ENCODE measurements at regions of chr7 and their contacts with region 1.

Region 1: GRCh38 chr7:5494683-5495561 is 71.3 kb upstream of the TNRC18 start:
- DNase-seq: peak; percentile 74 to 97 (median 84)

Region 2: GRCh38 chr7:5557920-5558401 is 63.0 kb after region 1 on chr7:
- intact Hi-C with region 1: loop called (anchors 1 kb)
- DNase-seq: peak in 5 of 10 donors; percentile 29 to 83 (median 41)

Region 3: GRCh38 chr7:5677538-5678294 is 182.8 kb after region 1 on chr7:
- intact Hi-C with region 1: loop called (anchors 5 kb)
- DNase-seq: peak; percentile 42 to 95 (median 70)

Region 4: DNA sequence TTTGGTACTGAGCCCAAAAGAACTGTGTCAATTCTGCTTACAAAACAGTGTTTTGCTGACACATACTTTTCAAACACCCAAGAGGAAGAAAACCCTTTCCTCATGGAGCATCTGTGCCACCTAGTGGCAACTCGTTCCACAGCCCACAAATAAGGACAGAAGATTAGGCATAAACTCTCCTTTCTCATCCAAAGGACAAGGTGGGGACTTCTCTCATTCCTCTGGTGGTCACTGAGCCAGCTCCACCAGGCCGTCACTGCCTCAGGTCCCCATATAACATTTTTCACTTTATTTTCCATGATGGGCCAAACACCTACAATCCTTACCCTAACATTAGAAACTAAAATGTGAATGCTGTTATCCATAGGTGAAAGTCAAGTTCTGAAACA is 209.6 kb after region 1 on chr7:
- intact Hi-C with region 1: loop called (anchors 1 kb)
- DNase-seq: peak in 9 of 10 donors; percentile 45 to 95 (median 83)